ENCODE measurements at regions of chr11 and their contacts with region 1.

Region 1: GRCh38 chr11:75204685-75205563 is 35.6 kb upstream of the TPBGL start:
- DNase-seq: peak; percentile 97
- H3K4me3 ChIP-seq: no peak overlapping the region
- H3K27ac ChIP-seq: no peak overlapping the region
- H3K4me1 ChIP-seq: peaks cover 7% of the 10 kb centered on the region
- H3K27me3 ChIP-seq: no peaks in the 10 kb centered on the region
- CTCF ChIP-seq: peak; percentile 90 to 97 (median 92)
- POLR2A ChIP-seq: no peak

Region 2: DNA sequence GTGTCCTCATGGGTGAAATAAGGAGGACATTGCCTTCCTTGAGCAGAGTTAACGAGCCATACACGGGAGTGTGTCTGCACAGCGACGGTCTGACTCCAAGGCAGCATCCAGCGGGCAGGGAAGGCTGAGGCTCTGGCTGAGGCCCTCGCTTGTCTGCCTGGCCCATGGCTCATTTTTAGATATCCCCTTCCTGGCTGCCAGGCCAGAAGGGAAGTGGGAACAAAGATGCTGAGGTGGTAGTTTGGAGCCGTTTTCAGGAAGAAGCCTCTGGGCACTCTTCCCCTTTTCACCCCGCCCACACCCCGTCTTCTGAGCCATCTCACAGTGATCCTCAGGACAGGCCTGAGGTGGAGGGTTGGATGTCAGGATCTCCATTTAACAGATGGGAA is 57.1 kb before region 1 on chr11:
- intact Hi-C with region 1: loop called (anchors 5 kb)
- DNase-seq: no peak
- H3K4me3 ChIP-seq: no peak overlapping the region
- H3K27ac ChIP-seq: no peak overlapping the region
- H3K4me1 ChIP-seq: no peaks in the 10 kb centered on the region
- H3K27me3 ChIP-seq: no peaks in the 10 kb centered on the region
- CTCF ChIP-seq: no peak
- POLR2A ChIP-seq: no peak

Region 3: GRCh38 chr11:75325700-75326438 is 120.9 kb after region 1 on chr11:
- intact Hi-C with region 1: no loop called
- DNase-seq: no peak
- H3K4me3 ChIP-seq: no peak overlapping the region
- H3K27ac ChIP-seq: no peak overlapping the region
- H3K4me1 ChIP-seq: peaks cover 31% of the 10 kb centered on the region
- H3K27me3 ChIP-seq: no peaks in the 10 kb centered on the region
- CTCF ChIP-seq: no peak
- POLR2A ChIP-seq: no peak

Region 4: DNA sequence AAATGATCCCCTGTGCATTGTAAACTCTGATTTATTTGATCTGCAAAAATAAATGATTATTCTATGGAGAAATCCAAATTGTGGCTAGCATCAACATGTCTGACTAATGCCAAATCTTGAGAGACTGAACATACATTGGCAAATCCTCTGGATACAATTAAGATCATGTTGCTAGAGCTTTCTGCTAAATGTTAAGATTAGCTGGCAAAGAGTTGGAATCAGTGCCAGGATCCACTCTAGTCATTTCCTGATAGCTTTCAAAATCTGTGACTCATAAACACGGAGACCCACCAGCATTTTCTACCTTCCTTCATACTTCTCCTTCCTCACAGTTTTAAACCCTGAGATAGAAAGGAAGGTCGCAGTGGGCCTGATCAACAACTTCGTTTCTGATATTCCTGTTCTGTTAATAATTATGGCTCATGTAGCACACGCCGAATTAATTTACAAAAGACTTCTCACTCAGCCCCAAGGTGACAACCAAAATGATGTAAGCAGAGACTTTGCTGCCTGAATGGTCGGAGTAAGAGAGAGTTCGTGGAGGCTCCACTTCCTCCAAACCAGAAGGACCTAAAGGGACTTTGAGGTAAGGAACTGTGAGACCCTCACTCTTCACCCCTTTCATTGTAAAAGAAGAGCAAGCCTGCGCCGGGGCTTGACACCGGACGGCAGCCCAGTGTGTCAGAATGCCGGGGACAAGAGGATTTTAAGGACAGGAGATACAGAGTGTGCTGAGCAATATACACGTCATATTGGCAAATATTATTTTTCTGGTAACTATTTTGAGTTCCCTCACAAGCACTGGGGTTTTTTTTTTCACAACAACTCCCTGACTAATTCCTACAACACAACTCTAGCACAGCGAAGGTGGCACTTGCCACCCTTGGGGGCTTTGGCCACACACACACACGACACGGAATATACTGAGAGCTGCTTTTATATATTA is 399.1 kb after region 1 on chr11:
- intact Hi-C with region 1: no loop called
- DNase-seq: no peak
- H3K4me3 ChIP-seq: no peak overlapping the region
- H3K27ac ChIP-seq: no peak overlapping the region
- H3K4me1 ChIP-seq: no peaks in the 10 kb centered on the region
- H3K27me3 ChIP-seq: no peaks in the 10 kb centered on the region
- CTCF ChIP-seq: no peak
- POLR2A ChIP-seq: no peak